Activated B cell treated with CpG ODN at 0.5 μM for 24 hours (primary cell): ENCODE measurements at regions of chr2 and their contacts with region 1.

Region 1: GRCh38 chr2:134918526-134919340 is at the start of gene CCNT2:
- DNase-seq: peak; percentile 100
- ATAC-seq: peak; percentile 83
- H3K4me3 Mint-ChIP-seq: peak within 1 kb of the TSS; percentile 98
- H3K27ac Mint-ChIP-seq: peak within 1 kb of the TSS; percentile 99
- H3K4me1 Mint-ChIP-seq: peaks cover 54% of the 10 kb centered on the region
- H3K27me3 Mint-ChIP-seq: peaks cover 3% of the 10 kb centered on the region
- CTCF ChIP-seq: no peak
- total RNA-seq, gene CCNT2: 62.9 and 73.4 TPM in 2 replicates

Region 2: DNA sequence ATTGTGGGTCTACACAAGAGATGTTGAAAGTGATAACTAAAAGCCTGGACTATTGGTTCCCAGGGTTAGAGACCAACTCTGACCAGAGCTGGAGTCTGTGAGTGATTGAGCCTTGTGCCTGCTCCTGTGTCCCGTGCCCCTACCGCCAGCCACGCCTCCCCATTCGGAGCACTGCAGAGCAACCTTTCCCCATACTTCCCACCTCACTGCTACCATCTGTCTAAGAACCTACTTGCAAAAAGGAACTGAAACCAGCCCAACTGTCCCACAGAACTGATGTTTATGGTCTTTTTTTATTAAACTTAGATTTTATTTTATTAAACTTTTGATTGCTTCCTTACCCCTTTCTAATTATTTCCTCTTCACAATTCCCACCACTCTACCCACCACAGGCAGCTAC is 965.2 kb before region 1 on chr2:
- CTCF ChIA-PET with region 1: no interaction called
- POLR2A ChIA-PET with region 1: no interaction called
- intact Hi-C with region 1: loop called (anchors 2 kb)
- DNase-seq: peak; percentile 44
- ATAC-seq: peak; percentile 84
- H3K4me3 Mint-ChIP-seq: peak overlapping the region; percentile 46
- H3K27ac Mint-ChIP-seq: peak overlapping the region; percentile 78
- H3K4me1 Mint-ChIP-seq: peaks cover 83% of the 10 kb centered on the region
- H3K27me3 Mint-ChIP-seq: no peaks in the 10 kb centered on the region
- CTCF ChIP-seq: no peak

Region 3: GRCh38 chr2:134253804-134254203 is 664.9 kb before region 1 on chr2 and contains the start of gene MGAT5:
- CTCF ChIA-PET with region 1: no interaction called
- POLR2A ChIA-PET with region 1: no interaction called
- intact Hi-C with region 1: loop called (anchors 5 kb)
- DNase-seq: no peak
- ATAC-seq: peak; percentile 43
- H3K4me3 Mint-ChIP-seq: peak within 1 kb of the TSS; percentile 74
- H3K27ac Mint-ChIP-seq: peak within 1 kb of the TSS; percentile 95
- H3K4me1 Mint-ChIP-seq: peaks cover 95% of the 10 kb centered on the region
- H3K27me3 Mint-ChIP-seq: no peaks in the 10 kb centered on the region
- CTCF ChIP-seq: no peak
- total RNA-seq, gene MGAT5: 66.7 and 69.0 TPM in 2 replicates

Region 4: GRCh38 chr2:134282629-134283400 is 635.9 kb before region 1 on chr2:
- CTCF ChIA-PET with region 1: no interaction called
- POLR2A ChIA-PET with region 1: no interaction called
- intact Hi-C with region 1: loop called (anchors 2 kb)
- DNase-seq: no peak
- ATAC-seq: peak; percentile 70
- H3K4me3 Mint-ChIP-seq: peak overlapping the region; percentile 68
- H3K27ac Mint-ChIP-seq: peak overlapping the region; percentile 90
- H3K4me1 Mint-ChIP-seq: peaks cover 73% of the 10 kb centered on the region
- H3K27me3 Mint-ChIP-seq: no peaks in the 10 kb centered on the region
- CTCF ChIP-seq: no peak

Region 5: GRCh38 chr2:134943540-134943939 is 24.8 kb after region 1 on chr2:
- CTCF ChIA-PET with region 1: no interaction called
- POLR2A ChIA-PET with region 1: interaction called, 7 read pairs
- intact Hi-C with region 1: loop called (anchors 1 kb)
- DNase-seq: no peak
- ATAC-seq: peak; percentile 57
- H3K4me3 Mint-ChIP-seq: peak overlapping the region; percentile 11
- H3K27ac Mint-ChIP-seq: peak overlapping the region; percentile 75
- H3K4me1 Mint-ChIP-seq: peaks cover 32% of the 10 kb centered on the region
- H3K27me3 Mint-ChIP-seq: no peaks in the 10 kb centered on the region
- CTCF ChIP-seq: no peak

Region 6: GRCh38 chr2:135531231-135532228 is 612.8 kb after region 1 on chr2 and contains the start of gene R3HDM1:
- CTCF ChIA-PET with region 1: no interaction called
- POLR2A ChIA-PET with region 1: interaction called, 16 read pairs
- intact Hi-C with region 1: loop called (anchors 1 kb)
- DNase-seq: peak; percentile 82
- ATAC-seq: peak; percentile 81
- H3K4me3 Mint-ChIP-seq: no peak within 1 kb of the TSS
- H3K27ac Mint-ChIP-seq: peak within 1 kb of the TSS; percentile 68
- H3K4me1 Mint-ChIP-seq: peaks cover 18% of the 10 kb centered on the region
- H3K27me3 Mint-ChIP-seq: no peaks in the 10 kb centered on the region
- CTCF ChIP-seq: no peak
- total RNA-seq, gene R3HDM1: 49.8 and 54.8 TPM in 2 replicates

Region 7: DNA sequence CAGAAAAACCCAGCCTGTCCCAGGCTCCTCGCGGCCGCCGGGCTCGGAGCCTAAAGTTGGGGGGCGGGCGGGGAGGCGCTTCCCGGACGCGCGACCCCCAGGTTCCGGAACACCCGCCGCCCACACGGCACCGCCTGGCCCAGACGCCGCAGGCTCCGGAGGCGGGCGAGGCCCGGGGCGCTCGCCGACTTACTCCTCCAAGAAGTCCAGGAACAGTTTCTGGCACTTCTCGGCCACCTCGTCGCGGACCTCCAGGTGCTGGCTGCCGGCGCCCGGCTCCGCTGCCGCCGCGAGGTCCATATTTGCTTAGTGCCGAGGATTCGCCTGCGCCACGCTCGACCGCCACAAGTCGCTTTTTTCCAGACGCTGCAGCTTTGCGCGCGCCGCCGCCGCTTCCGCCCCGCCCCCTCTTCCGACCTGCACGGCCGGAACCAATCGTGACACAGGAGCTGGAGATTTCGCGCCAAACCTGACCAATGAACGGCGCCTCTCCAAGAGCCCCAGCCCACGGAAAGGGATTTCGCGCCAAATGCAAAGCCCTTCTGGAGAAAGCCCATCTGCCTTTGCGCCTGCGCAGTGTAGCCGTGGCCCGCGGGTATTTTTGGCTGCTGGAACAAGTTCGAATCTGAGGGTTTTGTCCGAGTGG is 957.5 kb after region 1 on chr2 and contains the start of gene MCM6:
- CTCF ChIA-PET with region 1: no interaction called
- POLR2A ChIA-PET with region 1: no interaction called
- intact Hi-C with region 1: loop called (anchors 1 kb)
- DNase-seq: peak; percentile 87
- ATAC-seq: peak; percentile 90
- H3K4me3 Mint-ChIP-seq: peak within 1 kb of the TSS; percentile 95
- H3K27ac Mint-ChIP-seq: peak within 1 kb of the TSS; percentile 90
- H3K4me1 Mint-ChIP-seq: peaks cover 24% of the 10 kb centered on the region
- H3K27me3 Mint-ChIP-seq: no peaks in the 10 kb centered on the region
- CTCF ChIP-seq: no peak
- total RNA-seq, gene MCM6: 27.9 and 28.9 TPM in 2 replicates